ENCODE measurements at regions of chr7 and their contacts with region 1.

Region 1: DNA sequence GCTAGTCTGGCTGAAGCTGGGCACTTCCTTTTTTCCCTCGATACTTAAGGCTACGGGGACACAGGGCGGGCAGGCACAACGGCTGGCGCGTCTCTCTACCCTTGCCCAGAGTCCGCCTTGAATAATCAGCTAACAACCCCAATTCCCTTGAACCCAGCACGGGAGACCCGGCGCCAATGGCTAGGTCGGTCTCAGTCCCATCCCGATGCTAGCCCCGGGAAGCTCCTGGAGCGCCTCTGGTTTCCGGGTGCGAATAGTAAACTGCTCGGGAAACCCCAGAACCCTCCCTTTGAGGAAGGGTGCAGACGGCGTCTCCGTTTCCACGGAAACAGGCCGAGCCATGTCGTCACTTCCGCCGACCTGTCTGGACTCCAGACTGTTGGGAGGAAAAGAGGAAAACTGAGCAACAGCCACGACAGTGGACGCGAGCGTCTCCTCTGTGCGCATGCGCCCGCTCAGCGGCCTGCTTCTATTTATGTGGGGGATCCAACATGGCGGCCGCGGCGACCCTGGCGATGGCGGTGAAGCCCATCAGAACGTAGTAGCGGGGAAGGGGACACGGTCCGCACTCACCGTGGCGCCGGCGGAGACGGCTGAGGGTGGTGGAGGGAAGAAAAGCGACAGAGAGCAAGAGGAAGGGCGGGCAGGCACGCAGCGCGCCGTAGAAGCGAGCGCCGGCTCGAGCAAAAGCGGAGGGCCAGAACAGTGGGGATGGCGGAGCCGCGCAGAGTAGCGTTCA is at the start of gene UBN2:
- DNase-seq: peak; percentile 97
- ATAC-seq: peak; percentile 88
- H3K4me3 ChIP-seq: peak within 1 kb of the TSS; percentile 87
- H3K27ac ChIP-seq: peak within 1 kb of the TSS; percentile 94
- H3K4me1 ChIP-seq: no peaks in the 10 kb centered on the region
- H3K27me3 ChIP-seq: no peaks in the 10 kb centered on the region
- CTCF ChIP-seq: no peak
- POLR2A ChIP-seq: peak; percentile 75
- RAD21 ChIP-seq: no peak
- total RNA-seq, gene UBN2: 2.3 and 3.6 TPM in 2 replicates

Region 2: GRCh38 chr7:139109188-139109982 is 121.6 kb before region 1 on chr7 and contains the start of gene ZC3HAV1:
- CTCF ChIA-PET with region 1: no interaction called
- POLR2A ChIA-PET with region 1: no interaction called
- dilution Hi-C with region 1: no loop called
- in situ Hi-C with region 1: no loop called
- intact Hi-C with region 1: loop called (anchors 2 kb)
- DNase-seq: peak; percentile 86
- ATAC-seq: peak; percentile 91
- H3K4me3 ChIP-seq: peak within 1 kb of the TSS; percentile 89
- H3K27ac ChIP-seq: peak within 1 kb of the TSS; percentile 69
- H3K4me1 ChIP-seq: peaks cover 2% of the 10 kb centered on the region
- H3K27me3 ChIP-seq: no peaks in the 10 kb centered on the region
- CTCF ChIP-seq: no peak
- POLR2A ChIP-seq: peak; percentile 76
- RAD21 ChIP-seq: no peak
- total RNA-seq, gene ZC3HAV1: 20.6 and 22.4 TPM in 2 replicates

Region 3: DNA sequence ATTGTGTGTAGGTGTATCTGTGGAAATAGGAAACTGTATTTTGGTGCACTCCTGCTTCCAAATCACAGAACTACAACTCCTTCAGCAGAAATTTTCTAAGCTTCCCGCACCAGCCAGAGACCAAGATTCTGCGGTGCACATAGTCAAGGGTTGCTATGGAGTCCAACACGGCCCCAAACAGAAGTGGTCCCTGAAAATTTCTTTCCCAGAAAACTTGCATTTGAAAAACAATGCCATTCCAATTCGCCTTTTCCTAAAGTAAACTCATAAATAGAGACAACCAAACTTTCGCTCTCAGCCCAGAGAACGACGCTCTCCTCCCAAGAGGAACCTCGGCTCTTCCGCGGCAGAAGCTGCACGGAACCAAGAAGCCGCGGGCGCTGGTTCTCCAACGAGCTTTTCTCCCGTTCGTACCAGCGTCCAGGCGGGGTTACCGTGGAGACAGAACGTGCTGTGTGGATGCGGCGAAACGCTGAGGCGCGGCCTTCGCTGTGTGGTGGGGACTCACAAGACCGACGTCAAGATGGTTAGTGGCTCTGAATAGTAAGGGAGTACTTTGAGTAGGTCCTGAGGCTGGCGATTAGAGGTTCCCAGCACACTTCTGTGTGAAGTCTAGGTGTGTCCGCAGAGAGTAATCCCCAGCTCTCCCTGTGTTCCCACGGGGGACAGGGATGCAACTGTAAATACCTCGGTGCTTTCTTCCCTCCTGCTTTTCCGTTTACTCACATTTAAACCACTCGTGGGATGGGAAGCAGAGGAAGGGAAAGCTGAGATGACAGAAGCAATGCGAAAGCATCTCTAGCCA is 97.4 kb before region 1 on chr7:
- CTCF ChIA-PET with region 1: no interaction called
- POLR2A ChIA-PET with region 1: no interaction called
- dilution Hi-C with region 1: no loop called
- in situ Hi-C with region 1: no loop called
- intact Hi-C with region 1: loop called (anchors 5 kb)
- DNase-seq: peak; percentile 86
- ATAC-seq: peak; percentile 100
- H3K4me3 ChIP-seq: peak overlapping the region; percentile 58
- H3K27ac ChIP-seq: peak overlapping the region; percentile 14
- H3K4me1 ChIP-seq: no peaks in the 10 kb centered on the region
- H3K27me3 ChIP-seq: no peaks in the 10 kb centered on the region
- CTCF ChIP-seq: no peak
- POLR2A ChIP-seq: no peak
- RAD21 ChIP-seq: peak; percentile 23

Region 4: GRCh38 chr7:139482662-139483469 is 251.9 kb after region 1 on chr7:
- CTCF ChIA-PET with region 1: no interaction called
- POLR2A ChIA-PET with region 1: no interaction called
- dilution Hi-C with region 1: no loop called
- in situ Hi-C with region 1: no loop called
- intact Hi-C with region 1: no loop called
- DNase-seq: no peak
- ATAC-seq: peak; percentile 76
- H3K4me3 ChIP-seq: no peak overlapping the region; the same call in 1 of the 2 replicates
- H3K27ac ChIP-seq: no peak overlapping the region
- H3K4me1 ChIP-seq: peaks cover 3% of the 10 kb centered on the region; the same call in 1 of the 2 replicates
- H3K27me3 ChIP-seq: peaks cover 64% of the 10 kb centered on the region
- CTCF ChIP-seq: no peak
- POLR2A ChIP-seq: no peak
- RAD21 ChIP-seq: no peak